ENCODE measurements at regions of chr19 and their contacts with region 1.

Region 1: GRCh38 chr19:18281082-18282020 is at the start of gene JUND:
- DNase-seq: peak; percentile 97 to 99 (median 99)
- H3K4me3 ChIP-seq: peak within 1 kb of the TSS; percentile 79 to 85
- H3K4me3 Mint-ChIP-seq: peak within 1 kb of the TSS; percentile 88 to 99 (median 96)
- H3K27ac ChIP-seq: peak within 1 kb of the TSS; percentile 98
- H3K27ac Mint-ChIP-seq: peak within 1 kb of the TSS; percentile 97 to 100 (median 98)
- H3K4me1 ChIP-seq: peaks cover 50% of the 10 kb centered on the region
- H3K4me1 Mint-ChIP-seq: peaks cover 30 to 60% (median 46%) of the 10 kb centered on the region in 4 donors
- H3K27me3 ChIP-seq: no peaks in the 10 kb centered on the region
- H3K27me3 Mint-ChIP-seq: peaks cover 0 to 6% of the 10 kb centered on the region in 2 donors
- total RNA-seq, gene JUND: 163 TPM

Region 2: DNA sequence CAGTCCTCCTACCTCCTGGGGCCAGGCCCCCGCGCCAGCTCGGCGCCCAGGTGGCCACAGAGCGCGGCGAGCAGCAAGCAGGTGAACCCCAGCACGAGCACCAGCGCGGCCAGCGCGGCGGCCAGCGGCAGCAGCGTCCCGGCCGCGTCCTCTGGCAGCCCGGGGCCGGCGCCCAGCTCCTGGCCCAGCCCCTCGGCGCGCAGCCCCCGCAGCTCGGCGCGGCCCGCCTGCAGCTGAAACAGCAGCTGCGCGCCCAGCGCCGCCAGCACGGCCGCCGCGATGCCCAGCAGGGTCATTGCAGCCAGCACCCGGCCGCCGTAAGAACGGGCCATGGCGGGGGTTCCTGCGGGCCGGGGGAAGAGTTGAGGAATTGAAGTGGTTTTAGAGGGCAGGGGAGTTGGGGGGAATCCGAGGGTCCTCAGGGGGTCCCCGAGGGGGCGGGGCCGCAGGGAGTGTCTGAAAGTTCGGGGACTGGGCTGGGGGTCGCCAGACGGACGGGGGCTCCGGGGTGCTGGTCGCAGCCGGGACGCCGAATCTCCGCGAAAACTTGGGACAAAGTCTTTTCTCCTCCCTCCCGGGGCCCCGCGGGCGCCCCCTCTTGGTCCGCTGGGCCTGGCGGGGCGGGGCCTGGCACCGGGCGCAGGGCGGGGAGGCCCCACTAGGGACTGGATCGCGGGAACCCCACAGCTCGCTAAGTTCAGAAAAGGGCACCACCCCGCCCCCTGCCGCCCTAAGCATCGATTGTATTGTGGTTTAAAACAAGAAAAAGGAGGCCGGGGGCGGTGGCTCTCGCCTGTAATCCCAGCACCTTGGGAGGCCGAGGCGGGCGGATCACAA is 833.0 kb before region 1 on chr19 and contains the start of gene TMEM221:
- CTCF ChIA-PET with region 1: no interaction called
- POLR2A ChIA-PET with region 1: no interaction called
- intact Hi-C with region 1: no loop called
- DNase-seq: peak; percentile 41 to 60 (median 51)
- H3K4me3 ChIP-seq: peak within 1 kb of the TSS in 1 of 2 donors; percentile 32
- H3K4me3 Mint-ChIP-seq: peak within 1 kb of the TSS; percentile 27 to 71 (median 60)
- H3K27ac ChIP-seq: no peak within 1 kb of the TSS
- H3K27ac Mint-ChIP-seq: no peak within 1 kb of the TSS
- H3K4me1 ChIP-seq: peaks cover 11% of the 10 kb centered on the region
- H3K4me1 Mint-ChIP-seq: peaks cover 5 to 15% (median 7%) of the 10 kb centered on the region in 4 donors
- H3K27me3 ChIP-seq: no peaks in the 10 kb centered on the region
- H3K27me3 Mint-ChIP-seq: peaks cover 10 to 13% of the 10 kb centered on the region in 2 donors
- total RNA-seq, gene TMEM221: not detected

Region 3: DNA sequence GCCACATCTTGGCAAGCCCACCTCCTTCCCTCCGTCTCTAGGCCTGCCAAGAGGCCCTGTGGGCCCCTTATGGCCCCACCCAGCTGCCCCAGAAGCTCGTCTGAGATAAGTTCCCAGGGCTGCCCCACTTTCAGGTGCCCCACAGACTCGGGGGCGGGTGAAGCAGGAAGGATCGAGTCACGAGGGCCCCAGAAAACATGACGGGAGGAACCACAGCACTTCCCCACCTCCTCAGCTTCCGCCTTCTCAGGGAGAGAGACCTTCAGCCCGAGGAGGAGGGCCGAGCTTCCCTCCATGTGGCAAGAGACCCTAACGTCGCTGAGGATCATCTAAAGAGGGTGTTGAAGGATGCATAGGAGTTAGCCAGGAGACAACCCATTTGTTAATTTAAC is 190.1 kb before region 1 on chr19:
- CTCF ChIA-PET with region 1: interaction called, 5 read pairs
- POLR2A ChIA-PET with region 1: interaction called, 26 read pairs
- intact Hi-C with region 1: no loop called
- DNase-seq: peak; percentile 81 to 91 (median 83)
- H3K4me3 ChIP-seq: peak overlapping the region in 1 of 2 donors; percentile 16
- H3K4me3 Mint-ChIP-seq: peak overlapping the region in 7 of 8 donors; percentile 68 to 83 (median 75)
- H3K27ac ChIP-seq: peak overlapping the region; percentile 85
- H3K27ac Mint-ChIP-seq: peak overlapping the region; percentile 98 to 100 (median 99)
- H3K4me1 ChIP-seq: peaks cover 68% of the 10 kb centered on the region
- H3K4me1 Mint-ChIP-seq: peaks cover 39 to 76% (median 55%) of the 10 kb centered on the region in 4 donors
- H3K27me3 ChIP-seq: no peaks in the 10 kb centered on the region
- H3K27me3 Mint-ChIP-seq: no peaks in the 10 kb centered on the region

Region 4: DNA sequence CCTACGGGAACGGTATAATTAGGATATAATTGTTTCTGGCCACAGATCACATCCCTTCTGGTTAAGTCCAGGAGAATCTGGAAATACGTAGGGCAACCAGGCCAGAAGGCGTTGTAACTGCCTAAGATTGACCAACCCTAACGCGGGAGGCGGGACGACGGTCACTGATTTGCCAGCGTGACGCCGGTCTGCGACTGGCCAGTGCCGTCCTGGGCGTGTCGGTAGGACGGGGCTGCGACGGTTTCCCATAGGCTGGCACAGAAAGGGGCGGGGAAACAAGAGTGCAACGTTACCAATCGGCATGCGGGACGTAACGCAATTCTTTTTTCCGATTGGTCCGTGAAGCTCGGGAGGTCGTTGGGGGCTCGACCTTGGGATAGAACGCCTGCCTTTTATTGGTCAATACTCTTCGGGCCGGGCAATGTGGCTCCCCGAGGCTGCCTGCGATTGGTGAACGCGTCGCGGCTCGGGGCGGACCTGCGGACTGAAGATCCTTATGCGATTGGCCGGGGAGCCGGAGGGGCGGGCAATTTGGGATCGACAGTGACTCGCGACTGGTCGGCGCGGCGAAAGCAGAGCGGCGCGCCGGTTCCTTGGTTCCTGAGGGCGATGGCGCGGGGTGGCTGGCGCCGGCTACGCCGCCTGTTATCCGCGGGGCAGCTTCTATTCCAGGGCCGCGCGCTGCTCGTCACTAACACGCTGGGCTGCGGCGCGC is 88.5 kb before region 1 on chr19 and contains the start of gene MPV17L2:
- CTCF ChIA-PET with region 1: interaction called, 6 read pairs
- POLR2A ChIA-PET with region 1: interaction called, 71 read pairs
- intact Hi-C with region 1: no loop called
- DNase-seq: peak; percentile 98 to 100 (median 99)
- H3K4me3 ChIP-seq: peak within 1 kb of the TSS; percentile 63 to 83
- H3K4me3 Mint-ChIP-seq: peak within 1 kb of the TSS; percentile 87 to 96 (median 92)
- H3K27ac ChIP-seq: peak within 1 kb of the TSS; percentile 73
- H3K27ac Mint-ChIP-seq: peak within 1 kb of the TSS; percentile 89 to 98 (median 96)
- H3K4me1 ChIP-seq: peaks cover 22% of the 10 kb centered on the region
- H3K4me1 Mint-ChIP-seq: peaks cover 11 to 26% (median 20%) of the 10 kb centered on the region in 4 donors
- H3K27me3 ChIP-seq: no peaks in the 10 kb centered on the region
- H3K27me3 Mint-ChIP-seq: no peaks in the 10 kb centered on the region
- total RNA-seq, gene MPV17L2: 7.6 to 7.8 TPM

Region 5: GRCh38 chr19:18233224-18233825 is 48.0 kb before region 1 on chr19:
- CTCF ChIA-PET with region 1: no interaction called
- POLR2A ChIA-PET with region 1: no interaction called
- intact Hi-C with region 1: no loop called
- DNase-seq: peak; percentile 43 to 66 (median 54)
- H3K4me3 ChIP-seq: no peak overlapping the region
- H3K4me3 Mint-ChIP-seq: no peak overlapping the region
- H3K27ac ChIP-seq: no peak overlapping the region
- H3K27ac Mint-ChIP-seq: no peak overlapping the region
- H3K4me1 ChIP-seq: no peaks in the 10 kb centered on the region
- H3K4me1 Mint-ChIP-seq: peaks cover 0 to 4% (median under 1%) of the 10 kb centered on the region in 4 donors
- H3K27me3 ChIP-seq: peaks cover 25% of the 10 kb centered on the region
- H3K27me3 Mint-ChIP-seq: peaks cover 47% of the 10 kb centered on the region in 2 donors

Region 6: GRCh38 chr19:18291590-18292461 is 10.5 kb after region 1 on chr19:
- CTCF ChIA-PET with region 1: interaction called, 53 read pairs
- POLR2A ChIA-PET with region 1: interaction called, 1,055 read pairs
- intact Hi-C with region 1: loop called (anchors 1 kb)
- DNase-seq: peak; percentile 70 to 85 (median 78)
- H3K4me3 ChIP-seq: peak overlapping the region; percentile 66 to 81
- H3K4me3 Mint-ChIP-seq: peak overlapping the region; percentile 79 to 95 (median 92)
- H3K27ac ChIP-seq: peak overlapping the region; percentile 98
- H3K27ac Mint-ChIP-seq: peak overlapping the region; percentile 79 to 100 (median 100)
- H3K4me1 ChIP-seq: peaks cover 64% of the 10 kb centered on the region
- H3K4me1 Mint-ChIP-seq: peaks cover 35 to 80% (median 49%) of the 10 kb centered on the region in 4 donors
- H3K27me3 ChIP-seq: no peaks in the 10 kb centered on the region
- H3K27me3 Mint-ChIP-seq: no peaks in the 10 kb centered on the region

Region 7: GRCh38 chr19:18328340-18329034 is 47.1 kb after region 1 on chr19:
- CTCF ChIA-PET with region 1: interaction called, 542 read pairs
- POLR2A ChIA-PET with region 1: interaction called, 1,691 read pairs
- intact Hi-C with region 1: loop called (anchors 1 kb)
- DNase-seq: peak; percentile 87 to 91 (median 88)
- H3K4me3 ChIP-seq: no peak overlapping the region
- H3K4me3 Mint-ChIP-seq: peak overlapping the region; percentile 42 to 83 (median 62)
- H3K27ac ChIP-seq: no peak overlapping the region
- H3K27ac Mint-ChIP-seq: peak overlapping the region; percentile 24 to 90 (median 69)
- H3K4me1 ChIP-seq: peaks cover 15% of the 10 kb centered on the region
- H3K4me1 Mint-ChIP-seq: peaks cover 8 to 18% (median 11%) of the 10 kb centered on the region in 4 donors
- H3K27me3 ChIP-seq: no peaks in the 10 kb centered on the region
- H3K27me3 Mint-ChIP-seq: peaks cover 0 to 1% of the 10 kb centered on the region in 2 donors

Region 8: GRCh38 chr19:18428787-18429674 is 147.7 kb after region 1 on chr19:
- CTCF ChIA-PET with region 1: no interaction called
- POLR2A ChIA-PET with region 1: interaction called, 18 read pairs
- intact Hi-C with region 1: no loop called
- DNase-seq: peak; percentile 90 to 93 (median 91)
- H3K4me3 ChIP-seq: peak overlapping the region in 1 of 2 donors; percentile 49
- H3K4me3 Mint-ChIP-seq: peak overlapping the region; percentile 21 to 72 (median 44)
- H3K27ac ChIP-seq: peak overlapping the region; percentile 87
- H3K27ac Mint-ChIP-seq: peak overlapping the region; percentile 87 to 95 (median 91)
- H3K4me1 ChIP-seq: peaks cover 67% of the 10 kb centered on the region
- H3K4me1 Mint-ChIP-seq: peaks cover 14 to 48% (median 30%) of the 10 kb centered on the region in 4 donors
- H3K27me3 ChIP-seq: no peaks in the 10 kb centered on the region
- H3K27me3 Mint-ChIP-seq: no peaks in the 10 kb centered on the region

Region 9: DNA sequence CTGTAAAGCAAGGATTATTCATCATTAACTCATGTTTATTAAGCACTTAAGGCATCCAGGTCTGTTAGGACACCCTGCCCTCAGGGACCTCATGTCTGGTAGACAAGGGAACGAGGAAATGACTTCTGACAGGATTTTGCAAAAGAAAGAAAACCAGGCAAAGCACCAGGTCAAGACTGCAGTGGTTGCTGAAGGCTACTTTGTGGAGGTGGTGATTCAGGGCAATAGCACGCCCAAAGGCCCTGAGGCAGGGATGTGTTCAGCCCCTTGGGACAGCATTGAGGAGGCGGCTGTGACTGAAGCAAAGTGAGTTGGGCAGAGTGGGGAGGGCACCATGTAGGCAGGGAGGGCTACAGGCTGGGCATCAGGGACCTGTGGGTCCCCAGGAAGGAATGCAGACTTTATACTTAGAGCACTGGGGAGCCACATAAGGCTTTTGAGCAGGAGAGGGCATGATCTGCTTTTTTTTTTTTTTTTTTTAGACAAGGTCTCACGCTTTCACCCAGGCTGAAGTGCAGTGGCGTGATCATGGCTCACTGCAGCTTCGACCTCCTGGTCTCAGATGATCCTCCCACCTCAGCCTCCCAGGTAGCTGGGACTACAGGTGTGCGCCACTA is 670.4 kb after region 1 on chr19:
- CTCF ChIA-PET with region 1: no interaction called
- POLR2A ChIA-PET with region 1: no interaction called
- intact Hi-C with region 1: no loop called
- DNase-seq: no peak
- H3K4me3 ChIP-seq: no peak overlapping the region
- H3K4me3 Mint-ChIP-seq: no peak overlapping the region
- H3K27ac ChIP-seq: no peak overlapping the region
- H3K27ac Mint-ChIP-seq: no peak overlapping the region
- H3K4me1 ChIP-seq: no peaks in the 10 kb centered on the region
- H3K4me1 Mint-ChIP-seq: peaks cover 0 to 8% (median under 1%) of the 10 kb centered on the region in 4 donors
- H3K27me3 ChIP-seq: no peaks in the 10 kb centered on the region
- H3K27me3 Mint-ChIP-seq: peaks cover 0 to 6% of the 10 kb centered on the region in 2 donors

Measured in CD4-positive, alpha-beta memory T cell (primary cell).